Cardiac septum (tissue), 1 donor: ENCODE measurements at regions of chr12 and their contacts with region 1.

Region 1: DNA sequence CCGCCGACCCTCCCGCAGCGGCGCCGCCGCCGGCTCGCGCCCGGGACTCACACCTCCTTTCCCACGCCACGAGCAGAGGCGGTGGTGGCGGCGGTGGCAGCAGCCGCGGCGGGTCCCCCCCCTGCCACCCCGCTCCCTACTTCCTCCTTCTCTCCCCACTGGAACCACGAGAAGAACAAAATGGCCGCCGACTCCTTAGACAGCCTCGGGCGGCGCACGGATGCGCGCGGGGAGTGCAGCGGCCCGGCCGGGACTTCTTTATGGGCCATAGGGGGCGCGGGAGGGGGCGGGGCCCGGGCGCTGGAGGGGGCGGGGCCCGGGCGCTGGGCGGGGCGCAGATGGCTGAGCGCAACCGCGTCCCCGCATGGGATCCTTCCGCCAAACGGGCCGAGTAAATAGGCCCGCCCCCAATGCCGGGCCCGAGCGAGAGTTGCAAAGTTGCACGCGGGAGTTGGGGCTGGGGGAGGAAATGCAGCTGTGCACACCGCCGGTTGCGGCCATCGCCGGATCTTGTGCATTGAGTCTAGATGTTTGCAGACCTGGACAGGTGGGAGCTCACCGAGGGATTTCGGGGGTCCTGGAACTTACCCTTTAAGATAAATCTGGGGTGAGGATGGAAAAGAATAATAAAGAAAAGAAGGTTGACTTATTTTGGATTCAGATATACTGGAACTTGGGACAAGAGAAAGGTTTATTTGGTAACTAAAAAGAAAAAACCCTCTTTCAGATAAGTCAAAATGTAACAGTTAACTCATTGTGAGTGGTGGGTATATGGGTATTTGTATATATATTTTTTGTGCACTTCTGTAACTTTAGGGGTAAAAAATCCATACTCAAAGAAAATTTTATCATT is at the start of gene PPP1CC:
- DNase-seq: peak; percentile 97
- total RNA-seq, gene PPP1CC: 102 TPM

Region 2: DNA sequence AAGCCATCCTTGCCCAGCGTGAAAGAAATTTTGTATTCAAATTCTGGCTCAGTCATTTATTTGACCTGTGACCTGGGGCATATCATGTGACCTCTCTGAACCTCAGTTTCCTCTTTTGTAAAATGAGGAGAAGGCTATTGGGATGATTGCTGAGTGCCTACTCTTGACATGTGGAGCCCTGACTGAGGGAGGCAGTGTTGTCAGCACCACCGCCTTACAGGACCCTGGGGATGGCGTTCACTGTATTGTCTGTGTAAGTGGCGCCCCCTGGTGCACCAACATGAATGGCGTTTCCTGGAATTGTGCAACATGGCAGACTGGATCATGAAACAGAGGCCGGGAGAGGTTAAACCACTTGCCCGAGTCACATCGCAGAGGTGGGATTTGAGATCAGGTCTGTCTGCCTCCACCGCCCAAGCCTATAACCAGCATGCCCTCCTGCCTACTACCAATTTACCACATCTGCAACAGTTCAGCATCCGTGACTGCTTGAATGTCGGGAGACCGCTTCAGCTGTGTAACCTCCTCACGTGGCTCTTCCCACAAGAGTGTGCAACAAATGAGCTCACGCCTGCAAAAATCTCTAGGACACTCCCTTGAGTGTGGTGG is 83.8 kb after region 1 on chr12:
- intact Hi-C with region 1: loop called (anchors 5 kb)
- DNase-seq: peak; percentile 85